Naive thymus-derived CD4-positive, alpha-beta T cell (primary cell): ENCODE measurements at regions of chr19 and their contacts with region 1.

Region 1: DNA sequence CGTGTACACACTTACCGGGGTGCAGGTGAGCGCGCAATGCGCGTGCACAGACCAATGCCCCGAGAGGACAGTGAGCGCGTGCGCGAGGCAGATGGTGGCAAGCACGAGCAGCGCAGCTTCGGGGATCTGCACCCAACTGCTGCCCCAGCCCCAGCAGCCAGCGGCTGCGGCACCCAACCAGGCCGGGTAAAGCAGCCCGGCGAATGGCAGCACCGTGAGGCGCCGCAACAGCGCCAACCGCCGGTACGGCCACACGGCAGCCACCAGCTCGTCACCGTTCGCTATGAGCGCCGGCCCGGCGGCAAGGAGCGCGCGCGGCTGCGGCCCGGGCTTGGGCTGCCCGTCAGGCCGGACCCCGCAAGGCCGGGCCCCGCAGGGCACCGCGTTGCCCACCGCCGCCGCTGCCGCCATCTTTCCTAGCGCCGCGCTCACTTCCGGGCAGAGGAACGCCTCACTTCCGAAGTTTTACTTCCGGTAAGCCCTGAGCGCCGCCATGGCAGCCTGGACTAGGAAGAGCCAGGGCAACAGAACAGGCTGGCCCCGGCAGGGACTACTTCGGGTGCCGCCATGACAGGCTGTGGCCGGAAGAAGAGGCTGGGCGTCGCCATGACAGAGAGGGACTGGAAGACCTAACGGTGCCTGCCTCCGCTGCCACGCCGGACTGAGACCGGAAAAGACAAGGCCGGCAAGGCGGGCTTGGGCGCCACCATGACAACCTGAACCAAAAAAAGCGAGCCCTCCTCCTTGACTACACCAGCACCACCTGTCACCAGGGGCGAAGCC is at the start of gene ATP13A1:
- DNase-seq: peak; percentile 83 to 96 (median 93)
- ATAC-seq: peak; percentile 85
- H3K4me3 ChIP-seq: peak within 1 kb of the TSS; percentile 96
- H3K4me3 Mint-ChIP-seq: peak within 1 kb of the TSS; percentile 79 to 99 (median 96)
- H3K27ac ChIP-seq: peak within 1 kb of the TSS; percentile 98
- H3K27ac Mint-ChIP-seq: peak within 1 kb of the TSS; percentile 93 to 99 (median 99)
- H3K4me1 ChIP-seq: peaks cover 30 to 32% of the 10 kb centered on the region in 2 donors
- H3K4me1 Mint-ChIP-seq: peaks cover 20 to 44% (median 36%) of the 10 kb centered on the region in 7 donors
- H3K27me3 ChIP-seq: no peaks in the 10 kb centered on the region
- H3K27me3 Mint-ChIP-seq: peaks cover 0 to 3% (median 0%) of the 10 kb centered on the region in 5 donors
- total RNA-seq, gene ATP13A1: 86.5 to 138 (median 98.9) TPM

Region 2: DNA sequence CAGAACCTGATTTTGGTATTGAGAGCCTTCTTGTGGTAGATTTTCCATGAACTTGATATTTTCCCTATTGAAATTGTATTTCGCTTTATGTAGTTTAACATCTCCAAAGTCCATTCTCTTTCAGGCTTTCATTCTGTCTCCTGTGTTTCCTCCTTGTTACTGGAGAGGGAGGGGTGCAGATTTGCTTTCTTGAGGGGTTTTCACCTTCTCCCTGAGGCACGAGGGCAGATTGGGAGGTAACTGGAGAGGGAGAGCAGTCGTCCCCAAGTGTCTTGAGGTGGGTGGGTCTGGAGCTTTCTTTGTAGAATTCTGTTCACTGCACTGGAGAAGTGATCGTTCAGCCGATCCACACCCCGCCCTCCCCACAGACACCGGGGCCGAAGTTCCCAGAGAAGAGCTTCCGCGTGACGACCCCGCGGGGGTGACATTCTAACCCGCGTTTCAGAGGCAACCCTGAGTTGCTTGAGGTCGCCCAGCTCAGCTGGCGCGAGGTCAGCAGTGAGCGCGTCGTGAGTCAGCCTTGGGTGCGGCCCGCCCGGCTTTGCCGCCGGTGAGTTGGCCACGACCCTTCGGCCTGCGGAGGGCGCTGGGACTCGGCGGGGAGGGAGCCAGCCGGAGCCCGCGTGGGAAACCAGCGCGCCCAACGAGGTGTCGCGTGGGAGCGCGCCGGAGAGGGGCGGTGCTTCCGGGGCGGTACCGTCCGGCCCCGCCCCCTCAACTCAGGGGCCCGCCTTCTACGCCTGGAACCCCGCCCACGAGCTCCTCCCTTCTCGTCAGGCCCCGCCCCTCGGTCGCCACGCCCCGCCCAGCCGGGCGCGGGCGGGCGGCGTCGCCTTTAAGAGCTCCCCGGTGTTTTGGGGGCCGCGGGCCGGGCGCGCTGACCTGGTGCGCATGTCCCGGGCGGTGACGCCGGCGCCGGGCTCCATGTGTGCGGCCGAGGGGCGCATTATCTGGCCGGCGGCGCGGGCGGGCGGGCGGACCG is 258.3 kb before region 1 on chr19 and contains the start of gene GATAD2A:
- CTCF ChIA-PET with region 1: no interaction called
- POLR2A ChIA-PET with region 1: no interaction called
- intact Hi-C with region 1: loop called in 1 of 2 experiments (anchors 5 kb)
- DNase-seq: peak; percentile 85 to 99 (median 90)
- ATAC-seq: peak; percentile 96
- H3K4me3 ChIP-seq: peak within 1 kb of the TSS; percentile 65
- H3K4me3 Mint-ChIP-seq: peak within 1 kb of the TSS; percentile 89 to 97 (median 94)
- H3K27ac ChIP-seq: peak within 1 kb of the TSS; percentile 86
- H3K27ac Mint-ChIP-seq: peak within 1 kb of the TSS; percentile 86 to 98 (median 92)
- H3K4me1 ChIP-seq: peaks cover 26 to 38% of the 10 kb centered on the region in 2 donors
- H3K4me1 Mint-ChIP-seq: peaks cover 37 to 70% (median 66%) of the 10 kb centered on the region in 7 donors
- H3K27me3 ChIP-seq: no peaks in the 10 kb centered on the region
- H3K27me3 Mint-ChIP-seq: no peaks in the 10 kb centered on the region
- total RNA-seq, gene GATAD2A: 97.9 to 123 (median 116) TPM

Region 3: GRCh38 chr19:19643158-19644053 is 20.0 kb before region 1 on chr19 and contains the start of gene GMIP:
- CTCF ChIA-PET with region 1: no interaction called
- POLR2A ChIA-PET with region 1: interaction called, 30 read pairs
- intact Hi-C with region 1: loop called (anchors 1 kb)
- DNase-seq: peak; percentile 82 to 91 (median 88)
- ATAC-seq: peak; percentile 94
- H3K4me3 ChIP-seq: peak within 1 kb of the TSS; percentile 82
- H3K4me3 Mint-ChIP-seq: peak within 1 kb of the TSS; percentile 93 to 100 (median 98)
- H3K27ac ChIP-seq: peak within 1 kb of the TSS; percentile 89
- H3K27ac Mint-ChIP-seq: peak within 1 kb of the TSS; percentile 88 to 98 (median 97)
- H3K4me1 ChIP-seq: peaks cover 10 to 18% of the 10 kb centered on the region in 2 donors
- H3K4me1 Mint-ChIP-seq: peaks cover 12 to 25% (median 18%) of the 10 kb centered on the region in 7 donors
- H3K27me3 ChIP-seq: no peaks in the 10 kb centered on the region
- H3K27me3 Mint-ChIP-seq: no peaks in the 10 kb centered on the region
- total RNA-seq, gene GMIP: 97.2 to 141 (median 109) TPM

Region 4: DNA sequence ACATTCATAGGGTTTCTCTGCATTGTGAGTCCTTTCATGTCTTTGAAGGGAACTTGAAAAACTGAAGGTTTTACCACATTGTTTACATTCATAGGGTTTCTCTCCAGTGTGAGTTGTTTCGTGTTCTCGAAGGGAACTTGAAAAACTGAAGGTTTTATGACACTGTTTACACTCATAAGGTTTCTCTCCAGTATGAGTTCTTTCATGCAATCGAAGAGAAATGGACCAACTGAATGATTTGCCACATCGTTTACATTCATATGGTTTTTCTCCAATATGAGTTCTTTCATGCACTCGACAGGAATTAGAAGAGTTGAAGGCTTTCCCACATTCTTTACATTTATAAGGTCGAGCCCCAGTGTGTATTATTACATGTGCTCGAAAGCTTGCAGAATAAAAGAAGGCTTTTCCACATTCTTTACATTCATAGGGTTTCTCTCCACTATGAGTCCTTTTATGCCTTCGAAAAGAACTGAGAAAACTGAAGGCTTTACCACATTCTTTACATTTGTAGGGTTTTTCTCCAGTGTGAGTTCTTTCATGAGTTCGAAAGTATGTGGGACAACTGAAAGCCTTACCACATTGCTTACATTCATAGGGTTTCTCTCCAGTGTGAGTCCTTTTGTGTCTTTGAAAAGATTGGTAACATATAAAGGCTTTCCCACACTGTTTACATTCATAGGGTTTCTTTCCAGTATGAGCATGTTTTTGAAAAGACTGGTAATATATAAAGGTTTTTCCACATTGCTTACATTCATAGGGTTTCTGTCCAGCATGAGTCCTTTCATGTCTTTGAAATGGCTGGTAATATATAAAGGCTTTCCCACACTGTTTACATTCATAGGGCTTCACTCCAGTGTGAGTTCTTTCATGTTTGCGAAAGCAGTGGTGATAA is 48.7 kb after region 1 on chr19:
- CTCF ChIA-PET with region 1: no interaction called
- POLR2A ChIA-PET with region 1: interaction called, 30 read pairs
- intact Hi-C with region 1: loop called in 1 of 2 experiments (anchors 5 kb)
- DNase-seq: no peak
- ATAC-seq: no peak
- H3K4me3 ChIP-seq: peak overlapping the region; percentile 17
- H3K4me3 Mint-ChIP-seq: peak overlapping the region in 2 of 10 donors; percentile 27 to 29
- H3K27ac ChIP-seq: no peak overlapping the region
- H3K27ac Mint-ChIP-seq: peak overlapping the region in 2 of 9 donors; percentile 51 to 83
- H3K4me1 ChIP-seq: no peaks in the 10 kb centered on the region
- H3K4me1 Mint-ChIP-seq: peaks cover 0 to 5% (median 0%) of the 10 kb centered on the region in 7 donors
- H3K27me3 ChIP-seq: no peaks in the 10 kb centered on the region
- H3K27me3 Mint-ChIP-seq: no peaks in the 10 kb centered on the region

Region 5: GRCh38 chr19:19865739-19866481 is 202.5 kb after region 1 on chr19 and contains the start of gene ZNF253:
- CTCF ChIA-PET with region 1: no interaction called
- POLR2A ChIA-PET with region 1: interaction called, 39 read pairs
- intact Hi-C with region 1: loop called (anchors 1 kb)
- DNase-seq: peak; percentile 76 to 95 (median 92)
- ATAC-seq: peak; percentile 95
- H3K4me3 ChIP-seq: peak within 1 kb of the TSS; percentile 93
- H3K4me3 Mint-ChIP-seq: peak within 1 kb of the TSS; percentile 98 to 100 (median 100)
- H3K27ac ChIP-seq: peak within 1 kb of the TSS; percentile 86
- H3K27ac Mint-ChIP-seq: peak within 1 kb of the TSS; percentile 96 to 100 (median 99)
- H3K4me1 ChIP-seq: peaks cover 7 to 13% of the 10 kb centered on the region in 2 donors
- H3K4me1 Mint-ChIP-seq: peaks cover 21 to 41% (median 31%) of the 10 kb centered on the region in 7 donors
- H3K27me3 ChIP-seq: no peaks in the 10 kb centered on the region
- H3K27me3 Mint-ChIP-seq: no peaks in the 10 kb centered on the region
- total RNA-seq, gene ZNF253: 9.5 to 33.8 (median 14.8) TPM

Region 6: GRCh38 chr19:20051841-20052768 is 388.7 kb after region 1 on chr19:
- CTCF ChIA-PET with region 1: no interaction called
- POLR2A ChIA-PET with region 1: no interaction called
- intact Hi-C with region 1: loop called in 1 of 2 experiments (anchors 5 kb)
- DNase-seq: peak; percentile 17 to 50 (median 44)
- ATAC-seq: peak; percentile 93
- H3K4me3 ChIP-seq: peak overlapping the region; percentile 98
- H3K4me3 Mint-ChIP-seq: peak overlapping the region; percentile 95 to 100 (median 98)
- H3K27ac ChIP-seq: peak overlapping the region; percentile 77
- H3K27ac Mint-ChIP-seq: peak overlapping the region; percentile 83 to 97 (median 94)
- H3K4me1 ChIP-seq: peaks cover 8% of the 10 kb centered on the region in 2 donors
- H3K4me1 Mint-ChIP-seq: peaks cover 0 to 17% (median 8%) of the 10 kb centered on the region in 7 donors
- H3K27me3 ChIP-seq: no peaks in the 10 kb centered on the region
- H3K27me3 Mint-ChIP-seq: peaks cover 0 to 4% (median 0%) of the 10 kb centered on the region in 5 donors